GM13976 (cell line): ENCODE measurements at regions of chr3 and their contacts with region 1.

Region 1: GRCh38 chr3:4978204-4978965 is 852 bp upstream of the BHLHE40 start:
- DNase-seq: peak; percentile 88
- CTCF ChIP-seq: no peak

Region 2: DNA sequence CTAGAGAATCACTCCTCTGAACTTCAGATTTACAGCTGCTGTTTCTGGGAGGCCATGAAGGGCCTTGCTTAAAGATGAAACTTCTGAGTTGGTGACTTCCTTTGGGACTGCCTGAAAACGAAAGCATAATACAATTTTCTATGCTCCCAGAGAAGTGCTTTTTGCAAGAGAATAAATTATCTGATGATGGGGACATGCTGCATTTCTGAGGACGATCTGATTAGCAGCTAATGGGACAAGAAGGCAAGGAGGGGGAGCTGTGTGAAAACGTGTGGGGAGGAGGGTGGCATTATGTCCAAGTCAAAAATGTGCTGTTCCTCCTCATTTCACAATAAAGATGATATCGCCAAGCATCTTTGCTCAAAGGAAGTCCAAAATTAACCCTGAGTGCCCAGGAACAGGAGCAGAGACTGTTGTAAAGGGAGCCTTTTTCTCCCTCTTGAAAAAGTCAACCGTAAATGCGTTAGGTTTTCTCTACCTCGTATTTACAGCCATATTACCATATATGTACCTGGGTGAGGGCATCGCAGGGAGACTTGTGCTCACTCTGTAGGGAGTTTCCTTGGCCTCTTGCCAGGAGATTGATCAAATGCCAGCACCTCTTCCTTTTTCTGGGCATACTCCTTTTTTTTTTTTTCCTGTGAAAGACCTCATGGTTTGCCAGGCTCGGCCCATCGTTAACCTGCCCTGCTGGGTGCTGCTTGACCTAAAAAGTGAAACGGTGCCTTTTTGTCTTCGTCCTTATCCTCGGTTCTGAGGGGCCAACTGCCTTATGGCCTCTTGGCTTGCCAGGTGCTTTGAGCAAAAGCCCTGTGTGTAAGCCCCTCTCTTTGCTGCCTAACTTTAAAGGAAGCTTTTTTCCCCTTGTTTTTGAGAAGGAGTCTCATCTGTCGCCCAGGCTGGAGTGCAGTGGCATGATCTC is 473.8 kb before region 1 on chr3:
- in situ Hi-C with region 1: no loop called
- DNase-seq: no peak
- CTCF ChIP-seq: no peak

Region 3: DNA sequence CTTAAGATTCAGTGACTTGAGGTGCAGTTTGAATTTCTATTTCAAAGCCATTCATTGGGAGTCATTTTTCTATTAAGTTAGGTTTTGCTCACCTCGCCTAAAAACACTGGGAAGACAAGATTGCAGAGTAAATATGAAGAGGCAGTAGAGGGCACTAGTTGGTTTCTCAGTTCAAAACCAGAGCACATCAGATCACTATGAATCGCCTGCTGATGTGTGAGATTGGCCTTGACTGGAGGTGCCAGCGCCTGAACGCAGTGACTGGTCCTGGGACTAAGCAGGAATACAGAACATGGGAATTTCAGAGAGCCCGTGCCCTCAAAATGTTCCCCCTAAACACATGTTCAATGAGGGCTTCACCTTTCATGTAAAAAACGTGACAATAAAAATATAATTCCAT is 256.3 kb before region 1 on chr3:
- in situ Hi-C with region 1: loop called (anchors 10 kb)
- DNase-seq: peak; percentile 68
- CTCF ChIP-seq: no peak

Region 4: DNA sequence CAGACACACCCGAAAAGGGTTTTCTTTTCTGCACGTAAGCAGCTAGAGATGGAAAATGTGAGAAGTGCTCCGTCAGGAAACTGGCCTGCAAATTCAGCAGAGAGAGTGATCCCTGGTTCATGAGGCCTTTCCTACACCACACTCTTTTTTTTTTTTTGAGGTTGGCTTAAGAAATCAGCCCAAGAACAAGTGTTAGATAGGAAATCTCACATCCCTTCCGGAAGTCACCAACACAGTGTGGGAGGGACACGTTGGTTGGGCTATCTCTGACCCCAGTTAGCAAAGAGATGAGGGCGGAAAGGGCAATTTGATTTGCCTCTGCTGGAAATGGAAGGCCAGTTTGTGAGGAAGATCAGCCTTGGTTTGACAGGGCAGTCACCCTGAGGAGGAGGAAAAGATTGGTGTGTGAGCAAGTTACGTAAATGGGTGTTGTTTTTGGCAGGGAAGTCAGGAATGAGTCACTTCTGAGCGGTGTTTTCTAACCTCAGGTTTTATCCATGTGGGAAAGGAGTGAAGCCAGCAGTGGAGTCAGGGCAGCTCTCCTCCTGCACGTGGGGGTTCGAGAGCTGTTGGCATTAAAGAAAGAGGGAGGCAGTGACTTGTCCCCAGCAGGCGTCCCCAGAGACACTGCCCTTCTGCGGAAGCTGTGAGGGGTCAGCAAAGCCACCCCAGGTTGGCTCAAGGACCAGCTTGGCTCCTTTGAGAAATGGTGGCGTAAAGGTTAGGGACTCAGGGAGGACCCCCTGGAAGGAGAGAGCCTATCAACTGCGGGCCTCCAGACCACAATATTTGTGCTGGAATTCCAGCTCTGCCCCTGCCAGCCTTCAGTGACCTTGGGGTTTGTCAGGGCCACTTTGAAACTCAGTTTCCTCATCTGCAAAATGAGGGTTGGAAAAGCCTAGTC is 236.7 kb before region 1 on chr3:
- in situ Hi-C with region 1: no loop called
- DNase-seq: no peak
- CTCF ChIP-seq: no peak

Region 5: DNA sequence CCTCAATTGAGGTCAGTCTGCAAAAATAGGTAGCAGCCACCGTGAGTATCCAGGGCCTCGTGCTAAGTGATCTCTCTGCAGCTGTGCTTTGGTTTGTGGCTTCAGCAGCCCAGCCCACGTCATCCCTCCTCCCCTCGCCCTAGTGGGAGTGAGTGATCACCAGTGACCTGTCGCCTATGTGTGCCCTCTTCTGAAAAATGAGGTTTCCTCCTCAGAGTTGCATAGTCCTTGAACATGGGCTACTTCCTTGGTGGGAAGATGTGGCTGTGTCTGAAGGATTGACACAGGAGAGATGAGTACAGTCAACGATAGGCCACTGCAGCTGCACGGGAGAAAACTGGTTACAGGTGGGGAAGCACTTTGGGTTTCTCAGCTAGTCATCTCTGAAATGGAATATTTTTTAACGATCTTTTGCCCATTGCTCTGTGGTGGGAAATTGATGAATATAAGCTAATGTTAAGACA is 143.9 kb before region 1 on chr3:
- in situ Hi-C with region 1: loop called (anchors 10 kb)
- DNase-seq: peak; percentile 64
- CTCF ChIP-seq: no peak